A549 (cell line): ENCODE measurements at regions of chr11 and their contacts with region 1.

Region 1: DNA sequence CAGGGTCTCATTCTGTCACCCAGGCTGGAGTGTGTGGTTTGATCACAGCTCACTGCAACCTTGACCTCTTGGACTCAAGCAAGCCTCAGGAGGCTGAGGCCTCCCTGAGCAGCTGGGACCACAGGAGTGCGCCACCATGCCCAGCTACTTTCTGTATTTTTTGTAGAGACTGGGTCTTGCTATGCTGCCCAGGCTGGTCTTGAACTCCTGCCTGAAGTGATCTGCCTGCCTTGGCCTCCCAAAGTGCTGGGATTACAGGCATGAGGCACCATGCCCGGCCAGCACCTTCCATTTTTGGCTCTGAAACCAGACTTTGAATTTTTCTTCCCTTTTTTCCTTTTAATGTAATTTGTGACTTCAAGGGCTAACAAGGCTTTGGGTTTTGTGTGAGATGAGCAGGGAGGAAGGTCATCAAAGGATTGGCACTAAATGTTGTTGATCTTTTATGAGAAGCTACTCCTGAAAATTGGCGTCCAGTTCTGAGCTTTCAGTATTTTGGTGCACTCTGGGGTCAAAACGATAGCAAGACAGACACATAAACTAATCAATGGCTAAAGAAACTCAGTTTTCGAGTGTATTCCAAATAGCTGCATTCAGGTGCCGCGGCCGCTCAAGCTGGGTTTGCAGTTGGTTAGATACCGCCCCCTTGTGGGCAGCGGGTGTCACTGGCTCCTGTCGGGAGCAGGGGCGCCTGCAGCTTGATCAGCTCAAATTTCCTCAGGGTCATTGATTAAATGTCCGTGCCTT is 51.9 kb upstream of the CLMP start:
- DNase-seq: peak; percentile 60 to 75
- ATAC-seq: peak; percentile 89 to 94
- H3K4me3 ChIP-seq: no peak overlapping the region
- H3K27ac ChIP-seq: peak overlapping the region; percentile 67 to 80; a peak in 5 of 6 replicates
- H3K4me1 ChIP-seq: peaks cover 23% of the 10 kb centered on the region
- CTCF ChIP-seq: peak; percentile 91
- EP300 ChIP-seq: no peak
- POLR2A ChIP-seq: no peak
- RAD21 ChIP-seq: peak; percentile 97

Region 2: GRCh38 chr11:123103326-123103980 is 143.5 kb before region 1 on chr11:
- CTCF ChIA-PET with region 1: interaction called, 358 read pairs
- POLR2A ChIA-PET with region 1: interaction called, 10 read pairs
- DNase-seq: peak; percentile 26 to 59
- ATAC-seq: peak; percentile 74 to 84; a peak in 5 of 6 replicates
- H3K4me3 ChIP-seq: no peak overlapping the region
- H3K27ac ChIP-seq: no peak overlapping the region
- H3K4me1 ChIP-seq: no peaks in the 10 kb centered on the region; the same call in 1 of the 3 replicates
- CTCF ChIP-seq: peak; percentile 69
- EP300 ChIP-seq: no peak
- POLR2A ChIP-seq: no peak
- RAD21 ChIP-seq: peak; percentile 81 to 83

Region 3: GRCh38 chr11:123116486-123116885 is 130.4 kb before region 1 on chr11:
- CTCF ChIA-PET with region 1: interaction called, 358 read pairs
- POLR2A ChIA-PET with region 1: no interaction called
- DNase-seq: no peak
- ATAC-seq: no peak
- H3K4me3 ChIP-seq: no peak overlapping the region
- H3K27ac ChIP-seq: peak overlapping the region in 1 of 2 experiments; percentile 43; a peak in 2 of 6 replicates
- H3K4me1 ChIP-seq: peaks cover 17% of the 10 kb centered on the region
- CTCF ChIP-seq: no peak
- EP300 ChIP-seq: no peak
- POLR2A ChIP-seq: no peak
- RAD21 ChIP-seq: no peak

Region 4: GRCh38 chr11:123139206-123139605 is 107.7 kb before region 1 on chr11:
- CTCF ChIA-PET with region 1: interaction called, 10 read pairs
- POLR2A ChIA-PET with region 1: no interaction called
- DNase-seq: no peak
- ATAC-seq: no peak
- H3K4me3 ChIP-seq: no peak overlapping the region
- H3K27ac ChIP-seq: no peak overlapping the region
- H3K4me1 ChIP-seq: peaks cover 5% of the 10 kb centered on the region
- CTCF ChIP-seq: no peak
- EP300 ChIP-seq: no peak
- POLR2A ChIP-seq: no peak
- RAD21 ChIP-seq: no peak

Region 5: GRCh38 chr11:123188508-123189165 is 58.3 kb before region 1 on chr11:
- CTCF ChIA-PET with region 1: interaction called, 15 read pairs
- POLR2A ChIA-PET with region 1: no interaction called
- DNase-seq: no peak
- ATAC-seq: peak; percentile 26 to 62; a peak in 3 of 6 replicates
- H3K4me3 ChIP-seq: no peak overlapping the region
- H3K27ac ChIP-seq: peak overlapping the region; percentile 67 to 84
- H3K4me1 ChIP-seq: peaks cover 61% of the 10 kb centered on the region
- CTCF ChIP-seq: no peak
- EP300 ChIP-seq: no peak
- POLR2A ChIP-seq: no peak
- RAD21 ChIP-seq: no peak

Region 6: GRCh38 chr11:123231256-123231655 is 15.7 kb before region 1 on chr11:
- CTCF ChIA-PET with region 1: interaction called, 16 read pairs
- POLR2A ChIA-PET with region 1: no interaction called
- DNase-seq: peak; percentile 38 to 72
- ATAC-seq: peak; percentile 82 to 90
- H3K4me3 ChIP-seq: no peak overlapping the region
- H3K27ac ChIP-seq: peak overlapping the region; percentile 62 to 79
- H3K4me1 ChIP-seq: peaks cover 22% of the 10 kb centered on the region
- CTCF ChIP-seq: no peak
- EP300 ChIP-seq: no peak; a peak in 1 of 5 replicates
- POLR2A ChIP-seq: no peak
- RAD21 ChIP-seq: no peak

Region 7: DNA sequence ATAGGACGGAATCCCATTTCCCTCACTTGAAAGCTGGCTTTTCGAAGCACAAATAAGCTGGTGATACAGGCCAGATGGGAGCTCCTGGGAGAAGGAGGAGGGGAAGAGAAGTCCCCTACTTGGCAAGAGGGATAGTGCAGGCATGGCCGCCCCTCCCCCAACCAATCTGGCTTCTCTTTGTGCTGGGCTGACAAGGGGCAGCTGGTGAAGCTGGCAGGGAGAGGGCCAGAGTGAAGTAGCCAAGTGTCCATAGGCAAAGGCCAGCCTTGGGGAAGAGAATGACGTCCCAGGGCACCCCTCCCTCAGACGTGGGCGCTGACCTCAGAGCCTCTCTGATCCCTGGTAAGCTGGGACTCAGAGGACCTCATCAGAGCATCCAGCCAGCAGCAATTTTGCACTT is 104.5 kb after region 1 on chr11:
- CTCF ChIA-PET with region 1: no interaction called
- POLR2A ChIA-PET with region 1: no interaction called
- DNase-seq: no peak
- ATAC-seq: no peak
- H3K4me3 ChIP-seq: no peak overlapping the region
- H3K27ac ChIP-seq: no peak overlapping the region
- H3K4me1 ChIP-seq: no peaks in the 10 kb centered on the region
- CTCF ChIP-seq: no peak
- EP300 ChIP-seq: no peak
- POLR2A ChIP-seq: no peak
- RAD21 ChIP-seq: no peak

Region 8: DNA sequence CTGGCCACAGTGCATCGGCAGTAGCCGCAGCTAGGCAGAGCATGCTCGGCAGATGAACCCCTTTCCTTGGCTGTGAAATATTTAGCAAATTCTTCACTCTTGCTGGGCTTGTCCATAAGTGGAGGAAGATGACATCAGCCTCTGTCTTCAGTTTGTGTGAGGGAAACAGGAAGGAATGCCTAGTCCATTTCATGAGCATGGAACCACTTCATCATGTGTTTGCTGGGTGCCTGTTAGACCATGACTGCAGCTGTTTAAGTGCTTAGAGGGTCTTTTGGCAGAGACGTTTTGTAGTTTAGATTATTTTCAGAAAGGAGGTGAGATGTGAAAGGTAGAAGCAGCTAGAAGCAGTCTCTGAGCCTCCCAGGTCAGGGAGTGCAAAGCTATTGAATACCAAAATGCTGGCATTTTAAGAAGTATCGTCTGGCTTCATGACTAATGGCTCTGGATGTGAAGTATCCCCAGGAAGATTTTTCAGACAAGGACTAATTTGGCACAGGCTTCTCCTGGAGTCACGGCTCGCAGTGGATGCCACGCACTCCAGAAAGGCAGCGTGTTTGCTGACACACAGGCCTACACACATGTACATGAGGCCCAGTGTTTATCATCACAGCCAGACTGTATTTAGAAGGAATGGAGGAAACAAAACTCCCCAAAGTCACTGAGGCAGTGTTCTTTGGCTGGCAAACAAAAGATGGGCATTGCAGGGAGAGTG is 140.0 kb after region 1 on chr11:
- CTCF ChIA-PET with region 1: no interaction called
- POLR2A ChIA-PET with region 1: no interaction called
- DNase-seq: no peak
- ATAC-seq: no peak
- H3K4me3 ChIP-seq: no peak overlapping the region
- H3K27ac ChIP-seq: no peak overlapping the region
- H3K4me1 ChIP-seq: no peaks in the 10 kb centered on the region
- CTCF ChIP-seq: no peak
- EP300 ChIP-seq: no peak
- POLR2A ChIP-seq: no peak
- RAD21 ChIP-seq: no peak

Region 9: DNA sequence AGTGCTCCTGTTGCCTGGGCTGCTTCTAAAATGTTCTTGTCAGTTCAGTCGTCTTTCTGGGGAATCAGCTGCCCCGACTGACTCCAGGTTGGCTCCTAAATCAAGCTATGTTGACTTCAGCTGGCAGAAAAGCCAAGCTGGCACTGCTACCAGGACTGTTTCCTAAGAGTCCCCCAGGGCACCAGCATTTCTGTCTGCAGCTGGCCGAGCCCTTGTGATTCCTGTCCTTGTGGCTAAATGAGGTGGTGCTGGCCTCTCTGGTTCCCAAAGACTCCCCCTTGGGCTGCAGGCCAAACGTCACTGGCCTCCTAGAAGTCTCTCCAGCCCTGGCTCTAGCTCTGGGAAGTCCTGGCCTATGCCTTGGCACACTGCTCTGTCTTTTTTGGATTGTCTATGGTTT is 214.2 kb after region 1 on chr11:
- CTCF ChIA-PET with region 1: no interaction called
- POLR2A ChIA-PET with region 1: no interaction called
- DNase-seq: no peak
- ATAC-seq: peak in 1 of 2 experiments; percentile 30; a peak in 3 of 6 replicates
- H3K4me3 ChIP-seq: no peak overlapping the region
- H3K27ac ChIP-seq: peak overlapping the region in 1 of 2 experiments; percentile 58; a peak in 3 of 6 replicates
- H3K4me1 ChIP-seq: peaks cover 54% of the 10 kb centered on the region
- CTCF ChIP-seq: no peak
- EP300 ChIP-seq: no peak
- POLR2A ChIP-seq: no peak
- RAD21 ChIP-seq: no peak